ENCODE measurements at regions of chr6 and their contacts with region 1.

Region 1: DNA sequence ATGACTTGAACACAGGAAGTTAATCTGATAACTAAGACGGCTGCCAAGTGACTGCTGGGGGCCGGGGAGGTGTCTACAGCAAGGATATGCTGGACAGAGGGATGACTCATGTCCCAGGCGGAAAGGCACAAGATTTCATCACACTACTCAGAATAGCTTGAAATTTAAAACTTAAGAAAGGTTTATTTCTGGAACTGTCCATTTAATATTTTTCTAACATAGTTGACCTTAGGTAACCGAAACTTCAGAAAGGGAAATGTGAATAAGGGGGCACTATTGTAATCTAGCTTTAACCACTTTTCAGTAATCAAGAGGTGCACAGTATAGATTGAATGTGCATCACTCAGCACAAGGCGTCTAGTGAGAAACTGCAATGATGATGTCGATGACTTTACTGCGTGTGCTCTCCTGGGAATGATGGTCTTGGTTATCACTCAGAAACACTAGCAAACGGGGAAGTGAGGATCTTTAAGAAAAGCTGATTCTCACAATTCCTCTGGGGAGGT is 171.5 kb downstream of the QKI start:
- DNase-seq: peak; percentile 93
- H3K4me3 ChIP-seq: no peak overlapping the region
- H3K27ac ChIP-seq: peak overlapping the region; percentile 41
- H3K4me1 ChIP-seq: peaks cover 38% of the 10 kb centered on the region
- H3K27me3 ChIP-seq: no peaks in the 10 kb centered on the region
- CTCF ChIP-seq: no peak

Region 2: GRCh38 chr6:163226836-163227485 is 359.0 kb before region 1 on chr6:
- CTCF ChIA-PET with region 1: no interaction called
- POLR2A ChIA-PET with region 1: no interaction called
- intact Hi-C with region 1: no loop called
- DNase-seq: no peak
- H3K4me3 ChIP-seq: no peak overlapping the region
- H3K27ac ChIP-seq: no peak overlapping the region
- H3K4me1 ChIP-seq: no peaks in the 10 kb centered on the region
- H3K27me3 ChIP-seq: no peaks in the 10 kb centered on the region
- CTCF ChIP-seq: no peak

Region 3: GRCh38 chr6:163408352-163408991 is 177.5 kb before region 1 on chr6:
- CTCF ChIA-PET with region 1: no interaction called
- POLR2A ChIA-PET with region 1: no interaction called
- intact Hi-C with region 1: no loop called
- DNase-seq: no peak
- H3K4me3 ChIP-seq: no peak overlapping the region
- H3K27ac ChIP-seq: no peak overlapping the region
- H3K4me1 ChIP-seq: peaks cover 9% of the 10 kb centered on the region
- H3K27me3 ChIP-seq: no peaks in the 10 kb centered on the region
- CTCF ChIP-seq: no peak

Region 4: DNA sequence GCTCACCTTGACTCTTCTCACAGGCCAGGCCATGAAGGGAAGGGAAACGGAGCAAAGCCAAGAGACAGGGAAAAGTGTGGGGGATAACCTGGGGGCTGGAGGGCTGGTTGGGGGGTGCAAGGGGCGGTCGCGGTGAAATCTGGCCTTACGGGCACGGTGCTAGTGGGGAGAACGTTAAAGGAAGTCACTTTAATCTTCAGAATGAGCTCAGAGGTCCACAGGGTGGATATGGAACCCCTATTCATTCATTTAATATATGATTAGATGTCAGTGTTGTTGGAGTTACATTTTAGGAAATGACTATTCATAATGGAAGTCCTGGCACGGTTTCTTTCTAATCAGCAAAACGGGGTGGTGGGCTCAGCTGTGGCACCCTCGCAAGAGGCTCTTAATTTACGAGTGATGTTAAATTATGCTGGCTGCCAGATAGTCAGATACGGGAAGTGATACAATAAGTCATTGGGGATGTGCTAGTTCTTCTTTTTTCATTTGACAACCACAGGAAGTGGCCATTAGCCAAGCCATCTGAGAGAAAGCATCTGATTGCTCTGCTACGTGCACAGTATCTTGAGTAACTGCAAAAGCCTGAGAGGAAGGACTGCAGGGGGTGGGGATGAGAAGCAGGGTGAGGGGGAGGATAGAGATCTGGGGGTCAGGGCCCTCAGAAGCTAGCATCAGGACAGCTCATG is 81.5 kb after region 1 on chr6:
- CTCF ChIA-PET with region 1: no interaction called
- POLR2A ChIA-PET with region 1: no interaction called
- intact Hi-C with region 1: loop called (anchors 5 kb)
- DNase-seq: peak; percentile 97
- H3K4me3 ChIP-seq: peak overlapping the region; percentile 5
- H3K27ac ChIP-seq: peak overlapping the region; percentile 81
- H3K4me1 ChIP-seq: peaks cover 44% of the 10 kb centered on the region
- H3K27me3 ChIP-seq: no peaks in the 10 kb centered on the region
- CTCF ChIP-seq: no peak

Measured in A673 (cell line).